WTC11 (cell line): ENCODE measurements at regions of chr4 and their contacts with region 1.

Region 1: DNA sequence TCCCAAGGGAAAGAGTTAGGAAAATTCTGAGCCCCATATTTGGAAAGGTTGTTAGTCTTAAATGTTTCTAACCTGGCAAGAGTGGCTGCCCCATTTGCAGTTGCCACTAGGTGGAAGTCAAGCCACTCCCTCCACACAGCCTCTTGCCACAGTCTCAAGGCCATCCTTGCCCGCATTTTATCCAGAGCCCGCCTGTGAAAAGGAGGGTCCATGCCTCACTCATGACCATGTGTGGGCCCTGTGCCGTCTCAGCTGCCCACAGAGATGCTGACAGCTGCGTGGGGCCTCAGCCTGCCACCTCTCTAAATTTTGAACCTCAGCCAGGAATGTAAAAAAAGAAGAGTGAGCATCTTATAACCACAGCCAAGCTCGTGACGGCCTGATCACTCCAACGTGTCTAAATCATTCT is 201.5 kb upstream of the FAM241A start:
- DNase-seq: peak; percentile 62
- ATAC-seq: peak; percentile 98
- H3K4me3 Mint-ChIP-seq: no peak overlapping the region
- H3K27ac Mint-ChIP-seq: no peak overlapping the region
- H3K4me1 Mint-ChIP-seq: peaks cover 7% of the 10 kb centered on the region
- H3K27me3 Mint-ChIP-seq: no peaks in the 10 kb centered on the region
- CTCF ChIP-seq: peak; percentile 45; the same call in 1 of the 2 replicates

Region 2: DNA sequence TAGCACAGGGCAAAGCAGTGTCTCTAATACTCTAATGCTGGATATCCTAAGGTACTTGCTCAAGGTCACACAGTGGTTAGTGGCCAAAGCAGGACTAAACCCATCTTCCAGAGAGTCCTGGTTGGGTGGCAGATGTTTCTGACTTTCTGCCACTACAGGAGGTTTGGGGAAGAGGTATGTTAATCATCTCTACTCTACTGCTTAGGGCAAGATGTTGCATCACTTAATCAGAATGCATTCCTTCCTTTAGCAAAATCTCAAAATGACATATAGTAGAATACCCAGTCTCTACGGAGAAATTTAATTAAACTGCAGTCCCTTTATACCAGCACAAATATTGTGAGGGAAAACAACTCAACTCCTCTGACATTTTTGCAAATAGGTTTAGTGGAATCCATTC is 10.8 kb after region 1 on chr4:
- CTCF ChIA-PET with region 1: no interaction called
- POLR2A ChIA-PET with region 1: no interaction called
- DNase-seq: no peak
- ATAC-seq: no peak; the same call in 1 of the 2 replicates
- H3K4me3 Mint-ChIP-seq: no peak overlapping the region
- H3K27ac Mint-ChIP-seq: no peak overlapping the region
- H3K4me1 Mint-ChIP-seq: no peaks in the 10 kb centered on the region
- H3K27me3 Mint-ChIP-seq: no peaks in the 10 kb centered on the region; the same call in 1 of the 2 replicates
- CTCF ChIP-seq: no peak

Region 3: DNA sequence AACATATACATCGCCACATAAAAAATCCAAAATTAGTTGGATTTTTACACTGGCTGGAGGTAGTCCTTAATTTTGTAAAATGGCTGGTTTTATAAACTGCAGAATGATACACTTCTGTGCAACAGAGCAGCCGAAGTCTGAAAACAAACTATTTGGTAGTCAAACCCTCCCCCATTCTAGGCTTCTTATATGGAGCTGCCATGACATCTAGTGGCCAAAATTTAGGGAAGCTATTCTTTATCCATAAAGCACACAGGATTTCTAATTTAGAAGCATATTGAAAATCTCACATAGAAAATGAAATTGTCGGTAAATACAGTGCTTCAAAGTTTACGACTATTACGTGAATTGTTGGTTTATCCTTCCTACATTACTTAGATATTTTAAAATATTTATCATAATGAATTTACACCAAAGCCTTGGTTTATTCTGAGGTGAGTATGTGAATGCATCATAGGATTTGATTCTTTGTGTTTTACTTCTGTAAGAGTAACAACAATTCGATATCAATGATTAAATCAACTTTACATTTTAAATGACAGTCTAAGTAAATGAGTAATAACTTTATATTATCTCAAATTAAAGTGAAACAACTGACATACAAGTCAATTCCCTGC is 88.0 kb after region 1 on chr4:
- CTCF ChIA-PET with region 1: interaction called, 77 read pairs
- POLR2A ChIA-PET with region 1: no interaction called
- DNase-seq: no peak
- ATAC-seq: peak; percentile 68
- H3K4me3 Mint-ChIP-seq: no peak overlapping the region
- H3K27ac Mint-ChIP-seq: no peak overlapping the region
- H3K4me1 Mint-ChIP-seq: peaks cover 21% of the 10 kb centered on the region
- H3K27me3 Mint-ChIP-seq: no peaks in the 10 kb centered on the region
- CTCF ChIP-seq: no peak; the same call in 1 of the 2 replicates

Region 4: GRCh38 chr4:112060212-112060611 is 116.4 kb after region 1 on chr4:
- CTCF ChIA-PET with region 1: interaction called, 15 read pairs
- POLR2A ChIA-PET with region 1: no interaction called
- DNase-seq: no peak
- ATAC-seq: peak; percentile 70
- H3K4me3 Mint-ChIP-seq: no peak overlapping the region
- H3K27ac Mint-ChIP-seq: no peak overlapping the region
- H3K4me1 Mint-ChIP-seq: peaks cover 12% of the 10 kb centered on the region
- H3K27me3 Mint-ChIP-seq: no peaks in the 10 kb centered on the region
- CTCF ChIP-seq: no peak